Heart left ventricle (tissue), 16 donors: ENCODE measurements at regions of chr1 and their contacts with region 1.

Region 1: DNA sequence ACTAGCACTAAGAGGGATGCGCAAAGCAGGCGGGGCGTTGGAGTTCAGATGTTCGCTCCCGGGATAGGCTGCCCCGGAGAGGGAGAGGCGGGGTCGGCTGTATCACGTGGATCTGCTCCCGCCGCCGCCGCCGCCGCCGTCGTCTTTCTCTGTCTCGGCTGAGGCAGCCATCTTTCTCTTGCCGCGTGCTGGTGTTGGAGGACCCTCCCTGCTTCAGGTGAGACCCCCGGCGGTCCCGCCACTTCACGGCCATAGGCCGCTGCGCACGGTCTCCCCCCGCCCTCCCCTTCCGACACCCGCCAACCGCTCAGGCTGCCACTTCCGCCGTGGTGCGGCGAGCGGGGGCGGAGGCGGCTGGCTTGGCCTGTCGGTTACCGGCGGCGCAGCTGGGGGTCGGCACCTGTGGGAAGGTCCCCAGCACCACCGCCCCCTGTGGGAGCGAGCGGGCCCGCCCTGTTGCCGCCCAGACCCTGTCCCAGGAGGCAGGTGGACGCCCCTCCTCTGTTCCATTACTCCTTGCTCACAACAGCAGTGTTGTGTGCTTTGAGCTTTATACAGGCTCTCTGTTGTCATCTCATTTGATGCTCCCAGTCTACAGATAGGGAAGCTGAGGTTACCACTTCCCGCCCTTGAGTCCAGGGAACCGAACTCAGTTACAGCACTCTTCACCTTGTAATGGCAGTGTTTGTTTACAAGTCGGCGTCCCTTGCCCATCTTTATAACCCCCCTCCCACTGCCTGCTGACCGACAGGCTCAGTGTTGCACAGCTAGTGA is at the start of gene BTF3L4:
- DNase-seq: peak; percentile 95 to 98 (median 96)
- ATAC-seq: peak; percentile 98
- H3K4me3 ChIP-seq: peak within 1 kb of the TSS; percentile 63 to 97 (median 88)
- H3K27ac ChIP-seq: peak within 1 kb of the TSS; percentile 51 to 97 (median 90)
- H3K4me1 ChIP-seq: peaks cover 3 to 41% (median 34%) of the 10 kb centered on the region in 12 donors
- H3K27me3 ChIP-seq: no peaks in the 10 kb centered on the region
- CTCF ChIP-seq: peak in 1 of 12 donors; percentile 16
- POLR2A ChIP-seq: peak in 1 of 2 donors; percentile 81
- total RNA-seq, gene BTF3L4: 28.9 to 44.2 (median 33.1) TPM

Region 2: DNA sequence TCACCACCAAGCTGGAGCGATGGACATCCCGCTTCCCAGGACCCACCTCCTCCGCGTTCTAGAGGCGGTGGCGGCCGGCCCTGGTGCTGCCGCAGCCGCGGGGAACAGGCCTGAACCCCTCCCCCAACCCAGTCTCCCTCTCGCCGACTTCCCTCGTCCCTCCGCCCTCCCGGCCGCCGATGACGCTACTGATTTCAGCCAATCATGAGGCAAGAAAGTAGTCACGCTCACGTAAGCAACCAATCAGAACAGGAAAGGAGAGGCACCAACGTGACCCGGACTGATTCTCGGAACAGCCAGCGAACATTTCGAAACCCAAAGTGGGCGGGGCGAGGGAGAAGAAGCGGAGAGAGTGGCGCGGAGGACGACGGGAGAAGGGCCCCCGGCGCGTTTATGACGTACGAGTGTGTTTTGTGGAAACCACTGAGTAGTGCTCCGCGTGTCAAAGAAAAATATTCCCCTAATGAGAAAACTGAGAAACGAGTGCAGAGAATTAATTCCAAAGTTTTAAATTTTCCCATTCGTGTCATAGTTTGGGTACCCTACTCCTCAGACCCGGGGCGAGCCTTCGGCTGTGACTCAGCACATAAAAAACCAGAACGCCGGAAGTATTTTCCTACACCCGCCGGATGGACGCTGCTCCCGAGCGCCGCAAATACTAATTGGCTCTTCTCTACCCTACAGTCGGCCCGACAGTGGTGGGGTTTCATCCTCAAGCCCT is 177.6 kb before region 1 on chr1 and contains the start of gene NRDC:
- intact Hi-C with region 1: loop called in 1 of 10 experiments (anchors 5 kb)
- DNase-seq: peak; percentile 99 to 100 (median 100)
- ATAC-seq: peak; percentile 97 to 99 (median 98)
- H3K4me3 ChIP-seq: peak within 1 kb of the TSS; percentile 75 to 97 (median 92)
- H3K27ac ChIP-seq: peak within 1 kb of the TSS; percentile 81 to 99 (median 97)
- H3K4me1 ChIP-seq: peaks cover 8 to 46% (median 34%) of the 10 kb centered on the region in 12 donors
- H3K27me3 ChIP-seq: peaks cover 0 to 27% (median under 1%) of the 10 kb centered on the region in 9 donors
- CTCF ChIP-seq: peak in 1 of 12 donors; percentile 11
- POLR2A ChIP-seq: peak; percentile 6 to 85
- total RNA-seq, gene NRDC: 89.4 to 152 (median 125) TPM

Region 3: DNA sequence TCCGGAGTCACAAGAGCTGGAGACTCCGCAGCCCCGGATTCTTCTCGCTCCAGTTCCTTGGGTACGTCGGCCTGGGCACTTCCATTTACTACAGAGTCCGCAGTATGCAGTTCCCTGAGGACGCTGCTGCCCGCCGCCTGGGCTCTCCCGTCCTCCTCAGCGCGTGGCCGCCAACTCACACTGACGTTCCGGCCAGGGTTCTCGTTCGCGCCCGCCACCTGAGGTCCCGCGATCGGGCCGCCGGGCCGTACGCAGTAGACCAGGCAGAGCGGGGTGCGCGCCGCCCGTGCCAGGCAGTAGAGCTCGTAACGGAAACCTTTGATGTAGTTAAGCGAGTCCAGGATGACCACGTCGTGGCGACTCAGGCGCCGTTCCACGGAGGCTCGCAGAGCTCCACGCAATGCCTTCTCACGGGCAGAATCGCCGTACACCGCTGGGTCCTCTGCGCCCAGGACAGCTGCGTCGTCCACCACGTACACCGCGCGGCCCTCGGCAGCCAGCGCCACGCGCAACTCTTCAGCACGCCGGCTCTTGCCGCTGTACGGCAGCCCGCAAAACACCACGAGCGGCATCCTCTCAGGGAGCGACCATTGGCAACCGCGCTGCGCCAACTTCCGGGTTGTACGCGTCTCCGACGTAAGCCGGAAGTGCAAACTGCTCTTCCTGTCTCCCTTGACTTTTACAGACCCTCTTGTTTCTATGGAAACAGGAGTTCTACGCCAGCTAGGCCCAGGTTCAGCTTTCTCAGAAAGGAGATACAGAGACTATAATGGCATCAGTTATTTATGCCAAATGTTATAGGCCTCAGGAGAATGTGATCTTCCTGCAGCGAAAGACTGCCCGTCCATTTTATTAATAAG is 22.9 kb before region 1 on chr1 and contains the start of gene KTI12:
- intact Hi-C with region 1: loop called in 1 of 10 experiments (anchors 1 kb)
- DNase-seq: peak; percentile 85 to 93 (median 91)
- ATAC-seq: peak; percentile 91 to 97 (median 95)
- H3K4me3 ChIP-seq: peak within 1 kb of the TSS; percentile 66 to 95 (median 79)
- H3K27ac ChIP-seq: peak within 1 kb of the TSS; percentile 55 to 94 (median 82)
- H3K4me1 ChIP-seq: peaks cover 4 to 38% (median 19%) of the 10 kb centered on the region in 12 donors
- H3K27me3 ChIP-seq: no peaks in the 10 kb centered on the region
- CTCF ChIP-seq: no peak
- POLR2A ChIP-seq: peak in 1 of 2 donors; percentile 58
- total RNA-seq, gene KTI12: 2.4 to 7.1 (median 4.2) TPM